ENCODE measurements at regions of chr3 and their contacts with region 1.

Region 1: DNA sequence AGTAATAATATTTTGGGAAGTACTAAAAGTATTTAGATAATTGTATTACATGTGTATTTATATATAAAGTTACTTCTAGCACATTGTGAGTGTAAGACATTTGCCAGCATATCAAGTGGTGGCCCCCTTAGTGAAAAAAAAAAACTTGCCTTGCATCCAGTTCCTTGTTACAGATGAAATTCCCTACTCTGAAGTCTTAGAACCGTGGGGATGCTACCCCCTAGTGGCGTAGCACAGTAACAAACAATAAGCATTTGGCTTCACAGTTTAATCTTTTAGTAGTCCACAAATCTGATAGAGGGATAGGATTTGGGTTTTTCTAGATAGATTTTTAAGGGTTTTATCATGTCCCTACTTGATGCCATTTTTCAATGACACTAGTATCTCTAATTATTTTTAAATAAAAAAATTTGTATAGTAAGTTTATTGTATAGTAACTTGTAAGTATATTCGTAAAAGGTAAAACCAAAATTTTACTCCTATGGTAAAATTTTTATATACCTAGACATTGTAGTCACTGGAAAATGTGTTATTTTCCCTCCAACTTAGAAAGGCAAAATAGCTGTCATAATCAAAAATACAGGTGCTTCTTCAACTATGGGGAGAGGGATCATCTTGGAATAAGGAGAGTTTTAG is 14.3 kb downstream of the SMC4 start:
- DNase-seq: peak; percentile 15 to 84 (median 70)
- ATAC-seq: peak; percentile 86
- H3K4me3 ChIP-seq: no peak overlapping the region
- H3K4me3 Mint-ChIP-seq: no peak overlapping the region
- H3K27ac ChIP-seq: no peak overlapping the region
- H3K27ac Mint-ChIP-seq: no peak overlapping the region
- H3K4me1 ChIP-seq: no peaks in the 10 kb centered on the region
- H3K4me1 Mint-ChIP-seq: peaks cover 5% of the 10 kb centered on the region
- H3K27me3 ChIP-seq: no peaks in the 10 kb centered on the region
- H3K27me3 Mint-ChIP-seq: no peaks in the 10 kb centered on the region
- CTCF ChIP-seq: peak; percentile 99

Region 2: GRCh38 chr3:159266779-159267178 is 1147.0 kb before region 1 on chr3:
- CTCF ChIA-PET with region 1: no interaction called
- POLR2A ChIA-PET with region 1: no interaction called
- intact Hi-C with region 1: loop called in 1 of 2 experiments (anchors 5 kb)
- DNase-seq: no peak
- ATAC-seq: no peak
- H3K4me3 ChIP-seq: no peak overlapping the region
- H3K4me3 Mint-ChIP-seq: no peak overlapping the region
- H3K27ac ChIP-seq: no peak overlapping the region
- H3K27ac Mint-ChIP-seq: no peak overlapping the region
- H3K4me1 ChIP-seq: no peaks in the 10 kb centered on the region
- H3K4me1 Mint-ChIP-seq: no peaks in the 10 kb centered on the region
- H3K27me3 ChIP-seq: no peaks in the 10 kb centered on the region
- H3K27me3 Mint-ChIP-seq: peaks cover 3% of the 10 kb centered on the region
- CTCF ChIP-seq: no peak

Region 3: DNA sequence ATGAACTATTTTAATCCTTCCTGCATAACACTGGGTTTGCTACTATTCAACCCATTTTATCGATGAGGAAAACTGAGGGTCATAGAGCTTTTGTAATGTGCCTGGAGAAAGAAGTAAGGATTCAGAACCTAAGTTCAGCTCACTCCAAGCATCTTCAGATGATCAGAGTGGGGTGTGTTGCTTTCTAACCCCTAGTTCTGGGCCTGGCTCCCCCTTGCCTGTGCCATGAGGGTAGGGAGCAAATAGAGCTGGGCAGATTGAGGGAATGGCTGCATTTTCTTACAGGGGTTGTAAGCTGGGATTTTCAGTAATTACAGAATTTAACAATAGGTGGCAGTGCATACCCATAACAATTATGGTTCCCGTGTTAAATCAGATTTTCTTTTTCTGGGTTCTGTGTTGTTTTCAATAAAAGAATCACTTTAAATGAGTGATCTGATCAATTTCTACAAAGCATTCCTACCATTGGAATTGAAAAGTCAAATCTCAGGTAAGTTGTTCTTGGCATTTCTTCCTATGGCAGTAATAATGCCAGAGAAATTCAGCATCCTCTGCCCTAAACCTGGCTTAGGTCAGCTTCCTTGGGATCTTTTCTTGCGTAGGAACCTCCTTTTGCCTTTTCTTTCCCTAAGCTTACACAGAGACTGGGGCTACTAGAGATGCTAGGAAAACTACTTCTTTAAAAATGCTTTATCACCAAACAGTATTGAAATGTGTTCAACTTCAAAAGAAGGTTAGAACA is 528.9 kb before region 1 on chr3:
- CTCF ChIA-PET with region 1: interaction called, 7 read pairs
- POLR2A ChIA-PET with region 1: no interaction called
- intact Hi-C with region 1: loop called in 1 of 2 experiments (anchors 1 kb)
- DNase-seq: peak in 2 of 9 experiments; percentile 22 to 33
- ATAC-seq: no peak
- H3K4me3 ChIP-seq: no peak overlapping the region
- H3K4me3 Mint-ChIP-seq: no peak overlapping the region
- H3K27ac ChIP-seq: no peak overlapping the region
- H3K27ac Mint-ChIP-seq: no peak overlapping the region
- H3K4me1 ChIP-seq: no peaks in the 10 kb centered on the region
- H3K4me1 Mint-ChIP-seq: no peaks in the 10 kb centered on the region
- H3K27me3 ChIP-seq: no peaks in the 10 kb centered on the region
- H3K27me3 Mint-ChIP-seq: peaks cover 3% of the 10 kb centered on the region
- CTCF ChIP-seq: no peak

Region 4: GRCh38 chr3:160027541-160028195 is 386.1 kb before region 1 on chr3:
- CTCF ChIA-PET with region 1: interaction called, 13 read pairs
- POLR2A ChIA-PET with region 1: no interaction called
- intact Hi-C with region 1: loop called in 1 of 2 experiments (anchors 2 kb)
- DNase-seq: no peak
- ATAC-seq: no peak
- H3K4me3 ChIP-seq: no peak overlapping the region
- H3K4me3 Mint-ChIP-seq: no peak overlapping the region
- H3K27ac ChIP-seq: no peak overlapping the region
- H3K27ac Mint-ChIP-seq: no peak overlapping the region
- H3K4me1 ChIP-seq: no peaks in the 10 kb centered on the region
- H3K4me1 Mint-ChIP-seq: no peaks in the 10 kb centered on the region
- H3K27me3 ChIP-seq: no peaks in the 10 kb centered on the region
- H3K27me3 Mint-ChIP-seq: no peaks in the 10 kb centered on the region
- CTCF ChIP-seq: no peak

Region 5: DNA sequence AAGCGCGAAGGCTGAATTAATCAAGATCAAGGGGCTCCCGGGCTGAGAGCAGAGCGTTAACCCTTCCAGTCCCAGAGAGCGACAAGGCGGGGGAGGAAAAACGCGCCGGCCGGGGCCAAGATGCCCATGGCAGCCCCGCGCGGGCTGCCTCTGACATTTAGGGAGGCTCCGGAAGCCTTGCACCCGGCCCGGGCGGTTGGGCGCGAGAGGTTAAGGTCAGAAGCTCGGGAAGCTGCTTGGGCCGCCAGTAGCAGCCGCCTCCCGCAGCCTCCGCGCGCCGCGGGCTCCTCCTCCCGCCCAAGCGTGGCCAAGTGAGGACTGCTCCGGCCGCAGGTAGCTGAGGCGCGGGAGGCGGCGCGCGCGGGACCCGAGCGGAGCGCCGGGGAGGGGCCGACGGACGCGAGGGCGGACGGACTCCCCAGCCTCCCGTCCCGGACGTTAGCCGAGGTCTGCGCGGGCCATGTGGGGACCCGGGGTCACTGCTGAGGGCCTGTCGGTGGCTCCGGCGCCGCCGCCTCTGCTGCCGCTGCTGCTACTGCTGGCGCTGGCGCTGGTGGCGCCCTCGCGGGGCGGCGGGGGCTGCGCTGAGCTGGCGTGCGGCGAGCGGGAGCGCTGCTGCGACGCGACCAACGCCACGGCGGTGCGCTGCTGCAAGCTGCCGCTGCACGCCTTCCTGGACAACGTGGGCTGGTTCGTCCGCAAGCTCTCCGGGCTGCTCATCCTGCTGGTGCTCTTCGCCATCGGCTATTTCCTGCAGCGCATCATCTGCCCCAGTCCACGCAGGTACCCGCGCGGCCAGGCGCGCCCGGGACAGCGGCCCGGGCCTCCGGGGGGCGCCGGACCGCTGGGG is 188.3 kb before region 1 on chr3 and contains the start of gene C3orf80:
- CTCF ChIA-PET with region 1: no interaction called
- POLR2A ChIA-PET with region 1: no interaction called
- intact Hi-C with region 1: loop called (anchors 5 kb)
- DNase-seq: peak in 7 of 9 experiments; percentile 21 to 62 (median 25)
- ATAC-seq: peak; percentile 83
- H3K4me3 ChIP-seq: peak within 1 kb of the TSS; percentile 34 to 41
- H3K4me3 Mint-ChIP-seq: peak within 1 kb of the TSS; percentile 84
- H3K27ac ChIP-seq: no peak within 1 kb of the TSS
- H3K27ac Mint-ChIP-seq: no peak within 1 kb of the TSS
- H3K4me1 ChIP-seq: peaks cover 20% of the 10 kb centered on the region
- H3K4me1 Mint-ChIP-seq: peaks cover 20% of the 10 kb centered on the region
- H3K27me3 ChIP-seq: peaks cover 13 to 23% of the 10 kb centered on the region in 2 experiments
- H3K27me3 Mint-ChIP-seq: peaks cover 51% of the 10 kb centered on the region
- CTCF ChIP-seq: no peak
- total RNA-seq, gene C3orf80: not detected

Region 6: GRCh38 chr3:160399125-160400029 is 14.4 kb before region 1 on chr3 and contains the starts of genes IFT80 and SMC4:
- CTCF ChIA-PET with region 1: interaction called, 8 read pairs
- POLR2A ChIA-PET with region 1: interaction called, 4 read pairs
- intact Hi-C with region 1: loop called in 1 of 2 experiments (anchors 1 kb)
- DNase-seq: peak; percentile 87 to 98 (median 96)
- ATAC-seq: peak; percentile 95
- H3K4me3 ChIP-seq: peak within 1 kb of the TSS; percentile 84 to 85
- H3K4me3 Mint-ChIP-seq: peak within 1 kb of the TSS; percentile 90
- H3K27ac ChIP-seq: peak within 1 kb of the TSS; percentile 85 to 92
- H3K27ac Mint-ChIP-seq: peak within 1 kb of the TSS; percentile 99
- H3K4me1 ChIP-seq: peaks cover 35% of the 10 kb centered on the region
- H3K4me1 Mint-ChIP-seq: peaks cover 56% of the 10 kb centered on the region
- H3K27me3 ChIP-seq: peaks cover 0 to 8% of the 10 kb centered on the region in 2 experiments
- H3K27me3 Mint-ChIP-seq: peaks cover 26% of the 10 kb centered on the region
- CTCF ChIP-seq: no peak
- total RNA-seq, gene IFT80: 9.9 to 12.7 TPM
- total RNA-seq, gene SMC4: 40.8 to 43.5 TPM

Measured in CD8-positive, alpha-beta T cell (primary cell).